Natural killer cell (primary cell): ENCODE measurements at regions of chr9 and their contacts with region 1.

Region 1: GRCh38 chr9:33816327-33817252 is at the start of gene UBE2R2:
- DNase-seq: peak; percentile 83 to 98
- ATAC-seq: peak; percentile 70 to 88 (median 78)
- H3K4me3 ChIP-seq: peak within 1 kb of the TSS; percentile 91
- H3K4me3 Mint-ChIP-seq: peak within 1 kb of the TSS; percentile 93
- H3K27ac ChIP-seq: peak within 1 kb of the TSS; percentile 98
- H3K27ac Mint-ChIP-seq: peak within 1 kb of the TSS; percentile 90 to 91
- H3K4me1 ChIP-seq: peaks cover 32% of the 10 kb centered on the region
- H3K4me1 Mint-ChIP-seq: peaks cover 52 to 60% of the 10 kb centered on the region in 2 donors
- H3K27me3 ChIP-seq: no peaks in the 10 kb centered on the region
- H3K27me3 Mint-ChIP-seq: no peaks in the 10 kb centered on the region
- CTCF ChIP-seq: no peak
- total RNA-seq, gene UBE2R2: 31.2 to 36.0 (median 31.9) TPM

Region 2: DNA sequence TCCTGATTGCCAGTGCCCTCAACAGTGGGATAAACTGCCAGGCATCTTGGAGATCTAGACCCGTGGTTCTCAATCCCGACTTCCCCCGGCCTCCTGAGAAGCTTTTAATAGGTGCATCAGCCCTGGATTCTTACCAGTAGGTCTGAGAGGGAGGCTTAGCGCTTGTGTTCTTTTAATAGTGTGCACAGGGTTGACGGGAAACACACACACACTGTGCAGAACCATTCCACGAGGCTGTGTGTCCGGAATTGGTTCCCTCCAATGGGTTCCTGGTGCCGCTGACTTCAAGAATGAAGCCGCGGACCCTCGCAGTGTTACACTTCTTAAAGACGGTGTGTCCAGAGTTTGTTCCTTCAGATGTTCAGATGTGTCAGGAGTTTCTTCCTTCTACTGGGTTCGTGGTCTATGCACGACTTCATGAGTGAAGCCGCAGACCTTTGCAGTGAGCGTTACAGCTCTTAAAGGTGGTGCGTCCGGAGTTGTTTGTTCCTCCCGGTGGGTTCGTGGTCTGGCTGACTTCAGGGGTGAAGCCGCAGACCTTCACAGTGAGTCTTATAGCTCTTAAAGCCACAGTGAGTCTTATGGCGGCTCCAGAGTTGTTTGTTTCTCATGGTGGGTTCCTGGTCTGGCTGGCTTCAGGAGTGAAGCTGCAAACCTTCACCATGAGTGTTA is 67.8 kb before region 1 on chr9:
- intact Hi-C with region 1: loop called (anchors 2 kb)
- DNase-seq: peak; percentile 64 to 68
- ATAC-seq: peak; percentile 63 to 83 (median 63)
- H3K4me3 ChIP-seq: peak overlapping the region; percentile 41
- H3K4me3 Mint-ChIP-seq: peak overlapping the region; percentile 85
- H3K27ac ChIP-seq: peak overlapping the region; percentile 73
- H3K27ac Mint-ChIP-seq: peak overlapping the region; percentile 76 to 81
- H3K4me1 ChIP-seq: peaks cover 42% of the 10 kb centered on the region
- H3K4me1 Mint-ChIP-seq: peaks cover 38 to 47% of the 10 kb centered on the region in 2 donors
- H3K27me3 ChIP-seq: peaks cover 31% of the 10 kb centered on the region
- H3K27me3 Mint-ChIP-seq: peaks cover 23 to 45% of the 10 kb centered on the region in 2 donors
- CTCF ChIP-seq: no peak

Region 3: GRCh38 chr9:33778700-33779351 is 37.8 kb before region 1 on chr9:
- intact Hi-C with region 1: no loop called
- DNase-seq: peak; percentile 28 to 81
- ATAC-seq: peak; percentile 87 to 98 (median 96)
- H3K4me3 ChIP-seq: no peak overlapping the region
- H3K4me3 Mint-ChIP-seq: no peak overlapping the region
- H3K27ac ChIP-seq: no peak overlapping the region
- H3K27ac Mint-ChIP-seq: no peak overlapping the region
- H3K4me1 ChIP-seq: no peaks in the 10 kb centered on the region
- H3K4me1 Mint-ChIP-seq: peaks cover 5% of the 10 kb centered on the region in 2 donors
- H3K27me3 ChIP-seq: no peaks in the 10 kb centered on the region
- H3K27me3 Mint-ChIP-seq: peaks cover 11 to 13% of the 10 kb centered on the region in 2 donors
- CTCF ChIP-seq: peak; percentile 83

Region 4: DNA sequence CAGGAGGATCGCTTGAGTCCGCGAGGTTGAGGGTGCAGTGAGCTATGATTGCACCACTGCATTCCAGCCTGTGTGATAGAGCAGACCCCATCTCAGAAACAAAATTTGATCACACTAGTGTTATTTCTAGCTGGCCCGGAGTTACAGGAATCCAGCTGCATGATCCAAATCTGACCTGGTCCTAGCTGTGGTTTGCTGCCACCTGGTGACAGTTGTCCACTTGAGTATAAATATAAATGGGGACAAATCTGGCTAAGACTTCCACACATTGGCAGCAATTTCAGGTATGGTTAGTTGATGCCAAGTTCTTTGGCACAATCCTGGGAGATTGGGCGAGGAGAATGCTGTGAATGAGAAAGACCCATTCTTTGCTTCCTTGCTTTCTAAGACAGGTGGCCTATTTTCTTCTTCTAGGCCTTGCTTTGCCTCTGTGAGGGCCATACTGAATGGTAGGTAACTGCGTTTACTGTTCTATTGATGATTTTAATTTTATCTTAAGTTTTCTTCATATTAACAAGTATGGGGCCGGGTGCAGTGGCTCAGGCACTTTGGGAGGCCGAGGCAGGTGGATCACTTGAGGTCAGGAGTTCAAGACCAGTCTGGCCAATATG is 35.7 kb after region 1 on chr9:
- intact Hi-C with region 1: loop called (anchors 1 kb)
- DNase-seq: peak; percentile 44 to 80
- ATAC-seq: peak; percentile 69 to 85 (median 72)
- H3K4me3 ChIP-seq: no peak overlapping the region
- H3K4me3 Mint-ChIP-seq: no peak overlapping the region
- H3K27ac ChIP-seq: no peak overlapping the region
- H3K27ac Mint-ChIP-seq: no peak overlapping the region
- H3K4me1 ChIP-seq: peaks cover 5% of the 10 kb centered on the region
- H3K4me1 Mint-ChIP-seq: peaks cover 35 to 42% of the 10 kb centered on the region in 2 donors
- H3K27me3 ChIP-seq: no peaks in the 10 kb centered on the region
- H3K27me3 Mint-ChIP-seq: no peaks in the 10 kb centered on the region
- CTCF ChIP-seq: peak; percentile 52

Region 5: GRCh38 chr9:33924978-33925797 is 108.6 kb after region 1 on chr9:
- intact Hi-C with region 1: loop called (anchors 5 kb)
- DNase-seq: peak in 1 of 2 donors; percentile 44
- ATAC-seq: no peak
- H3K4me3 ChIP-seq: no peak overlapping the region
- H3K4me3 Mint-ChIP-seq: no peak overlapping the region
- H3K27ac ChIP-seq: no peak overlapping the region
- H3K27ac Mint-ChIP-seq: peak overlapping the region in 1 of 2 donors; percentile 14
- H3K4me1 ChIP-seq: no peaks in the 10 kb centered on the region
- H3K4me1 Mint-ChIP-seq: peaks cover 5 to 17% of the 10 kb centered on the region in 2 donors
- H3K27me3 ChIP-seq: no peaks in the 10 kb centered on the region
- H3K27me3 Mint-ChIP-seq: no peaks in the 10 kb centered on the region
- CTCF ChIP-seq: no peak

Region 6: GRCh38 chr9:34376596-34377403 is 560.2 kb after region 1 on chr9 and contains the start of gene MYORG:
- intact Hi-C with region 1: loop called (anchors 5 kb)
- DNase-seq: peak; percentile 80 to 97
- ATAC-seq: peak; percentile 71 to 86 (median 75)
- H3K4me3 ChIP-seq: peak within 1 kb of the TSS; percentile 54
- H3K4me3 Mint-ChIP-seq: peak within 1 kb of the TSS; percentile 90
- H3K27ac ChIP-seq: peak within 1 kb of the TSS; percentile 32
- H3K27ac Mint-ChIP-seq: peak within 1 kb of the TSS; percentile 58 to 82
- H3K4me1 ChIP-seq: peaks cover 44% of the 10 kb centered on the region
- H3K4me1 Mint-ChIP-seq: peaks cover 43 to 49% of the 10 kb centered on the region in 2 donors
- H3K27me3 ChIP-seq: no peaks in the 10 kb centered on the region
- H3K27me3 Mint-ChIP-seq: peaks cover 0 to 6% of the 10 kb centered on the region in 2 donors
- CTCF ChIP-seq: no peak
- total RNA-seq, gene MYORG: 0.58 to 0.93 (median 0.92) TPM